ENCODE measurements at regions of chr17 and their contacts with region 1.

Region 1: GRCh38 chr17:40559954-40560591 is 5.2 kb downstream of the CCR7 start:
- DNase-seq: peak; percentile 69 to 90 (median 84)
- ATAC-seq: peak; percentile 24
- H3K4me3 ChIP-seq: peak overlapping the region; percentile 71
- H3K4me3 Mint-ChIP-seq: peak overlapping the region; percentile 86
- H3K27ac ChIP-seq: peak overlapping the region; percentile 74 to 96
- H3K27ac Mint-ChIP-seq: peak overlapping the region; percentile 94
- H3K4me1 ChIP-seq: peaks cover 55% of the 10 kb centered on the region
- H3K4me1 Mint-ChIP-seq: peaks cover 90% of the 10 kb centered on the region
- H3K27me3 ChIP-seq: no peaks in the 10 kb centered on the region
- H3K27me3 Mint-ChIP-seq: no peaks in the 10 kb centered on the region
- CTCF ChIP-seq: peak; percentile 97

Region 2: DNA sequence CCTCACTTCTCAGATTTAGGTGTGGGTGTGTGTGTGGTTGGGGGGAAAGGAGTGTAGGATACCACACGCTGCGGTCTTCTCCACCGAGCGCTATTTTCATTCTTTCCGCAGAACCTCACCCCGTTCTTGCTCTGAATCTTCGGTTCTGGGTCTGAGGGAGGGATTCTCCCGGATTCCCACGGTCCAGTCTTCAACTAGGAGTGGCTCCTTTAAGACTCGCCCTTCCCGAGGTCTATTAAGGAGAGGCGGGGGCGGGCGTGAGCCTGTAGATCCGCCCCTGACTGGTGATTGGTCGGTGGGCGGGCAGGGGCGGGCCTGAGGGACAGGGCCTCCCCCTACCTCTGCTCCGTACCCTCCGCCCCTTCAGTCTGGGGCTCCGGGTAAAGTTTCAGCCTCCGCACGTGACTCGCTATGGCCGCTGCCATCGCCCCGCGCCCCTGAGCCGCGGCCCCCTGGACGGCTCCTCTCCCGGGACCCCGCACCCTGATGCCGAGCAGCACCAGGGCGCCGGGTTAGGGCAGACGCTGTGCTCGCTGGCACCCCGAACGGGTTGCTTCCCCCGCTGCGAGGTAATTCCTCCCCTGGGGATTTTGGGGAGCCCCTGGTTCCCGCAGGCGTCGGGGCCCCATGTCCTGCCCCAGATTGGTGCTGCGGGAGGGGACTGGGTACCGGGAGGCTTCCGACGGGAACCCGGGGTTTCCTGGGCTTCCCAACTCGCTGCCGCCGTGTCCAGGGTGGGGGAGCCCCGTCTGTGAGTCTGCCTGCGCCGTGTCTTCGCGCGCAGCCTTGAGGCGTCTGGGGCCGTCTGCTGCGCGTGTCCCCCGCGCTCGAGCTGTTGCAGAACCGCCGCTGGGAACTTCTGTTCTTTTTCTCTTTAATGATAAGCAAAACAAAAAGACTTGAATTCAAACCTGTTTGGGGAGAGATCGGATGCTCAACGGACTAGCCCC is 241.9 kb before region 1 on chr17:
- CTCF ChIA-PET with region 1: no interaction called
- POLR2A ChIA-PET with region 1: no interaction called
- intact Hi-C with region 1: loop called in 1 of 2 experiments (anchors 1 kb)
- DNase-seq: peak; percentile 88 to 96 (median 91)
- ATAC-seq: peak; percentile 61
- H3K4me3 ChIP-seq: peak overlapping the region; percentile 91 to 95
- H3K4me3 Mint-ChIP-seq: peak overlapping the region; percentile 91
- H3K27ac ChIP-seq: peak overlapping the region; percentile 94 to 97
- H3K27ac Mint-ChIP-seq: peak overlapping the region; percentile 99
- H3K4me1 ChIP-seq: peaks cover 72% of the 10 kb centered on the region
- H3K4me1 Mint-ChIP-seq: peaks cover 87% of the 10 kb centered on the region
- H3K27me3 ChIP-seq: no peaks in the 10 kb centered on the region
- H3K27me3 Mint-ChIP-seq: no peaks in the 10 kb centered on the region
- CTCF ChIP-seq: no peak

Region 3: DNA sequence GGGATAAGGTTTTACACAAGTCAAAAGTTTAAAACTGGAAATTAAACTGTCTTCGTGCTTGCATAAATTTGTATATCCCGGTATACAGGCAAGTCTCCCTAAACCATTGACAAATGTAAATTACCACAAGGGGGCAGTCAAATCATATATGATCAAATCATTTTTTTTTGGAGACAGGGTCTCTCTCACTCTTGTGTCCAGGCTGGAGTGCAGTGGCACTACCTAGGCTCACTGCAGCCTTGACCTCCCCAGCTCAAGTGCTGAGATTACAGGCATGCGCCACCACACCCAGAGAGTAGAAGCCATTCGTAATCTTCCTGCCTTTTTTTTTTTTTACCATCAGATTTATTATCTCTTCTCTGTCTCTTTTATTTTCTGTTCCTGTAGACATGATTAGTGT is 160.9 kb before region 1 on chr17:
- CTCF ChIA-PET with region 1: interaction called, 32 read pairs
- POLR2A ChIA-PET with region 1: no interaction called
- intact Hi-C with region 1: loop called (anchors 1 kb)
- DNase-seq: peak in 2 of 9 experiments; percentile 71 to 78
- ATAC-seq: peak; percentile 55
- H3K4me3 ChIP-seq: no peak overlapping the region
- H3K4me3 Mint-ChIP-seq: no peak overlapping the region
- H3K27ac ChIP-seq: no peak overlapping the region
- H3K27ac Mint-ChIP-seq: no peak overlapping the region
- H3K4me1 ChIP-seq: no peaks in the 10 kb centered on the region
- H3K4me1 Mint-ChIP-seq: peaks cover 16% of the 10 kb centered on the region
- H3K27me3 ChIP-seq: no peaks in the 10 kb centered on the region
- H3K27me3 Mint-ChIP-seq: no peaks in the 10 kb centered on the region
- CTCF ChIP-seq: peak; percentile 74

Region 4: GRCh38 chr17:40474419-40475002 is 85.6 kb before region 1 on chr17:
- CTCF ChIA-PET with region 1: interaction called, 19 read pairs
- POLR2A ChIA-PET with region 1: interaction called, 5 read pairs
- intact Hi-C with region 1: no loop called
- DNase-seq: no peak
- ATAC-seq: no peak
- H3K4me3 ChIP-seq: no peak overlapping the region
- H3K4me3 Mint-ChIP-seq: no peak overlapping the region
- H3K27ac ChIP-seq: no peak overlapping the region
- H3K27ac Mint-ChIP-seq: no peak overlapping the region
- H3K4me1 ChIP-seq: peaks cover 11% of the 10 kb centered on the region
- H3K4me1 Mint-ChIP-seq: peaks cover 10% of the 10 kb centered on the region
- H3K27me3 ChIP-seq: no peaks in the 10 kb centered on the region
- H3K27me3 Mint-ChIP-seq: no peaks in the 10 kb centered on the region
- CTCF ChIP-seq: no peak

Region 5: DNA sequence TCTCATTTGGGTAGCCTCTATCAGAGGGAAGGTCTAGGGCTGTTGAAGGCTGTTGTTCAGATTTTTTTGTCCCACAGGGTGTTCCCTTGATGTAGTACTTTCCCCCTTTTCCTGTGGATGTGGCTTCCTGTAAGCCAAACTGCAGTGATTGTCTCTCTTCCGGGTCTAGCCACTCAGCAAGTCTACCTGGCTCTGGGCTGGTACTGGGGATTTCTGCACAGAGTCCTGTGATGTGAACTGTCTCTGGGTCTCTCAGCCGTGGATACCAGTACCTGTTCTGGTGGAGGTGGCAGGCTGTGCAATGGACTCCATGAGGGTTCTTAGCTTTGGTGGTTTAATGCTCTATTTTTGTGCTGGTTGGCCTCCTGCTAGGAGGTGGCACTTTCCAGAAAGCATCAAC is 28.5 kb after region 1 on chr17:
- CTCF ChIA-PET with region 1: interaction called, 25 read pairs
- POLR2A ChIA-PET with region 1: interaction called, 14 read pairs
- intact Hi-C with region 1: no loop called
- DNase-seq: peak in 2 of 9 experiments; percentile 48 to 68
- ATAC-seq: no peak
- H3K4me3 ChIP-seq: no peak overlapping the region
- H3K4me3 Mint-ChIP-seq: peak overlapping the region; percentile 40
- H3K27ac ChIP-seq: peak overlapping the region in 1 of 2 experiments; percentile 22
- H3K27ac Mint-ChIP-seq: peak overlapping the region; percentile 89
- H3K4me1 ChIP-seq: peaks cover 63% of the 10 kb centered on the region
- H3K4me1 Mint-ChIP-seq: peaks cover 83% of the 10 kb centered on the region
- H3K27me3 ChIP-seq: no peaks in the 10 kb centered on the region
- H3K27me3 Mint-ChIP-seq: no peaks in the 10 kb centered on the region
- CTCF ChIP-seq: no peak

Region 6: DNA sequence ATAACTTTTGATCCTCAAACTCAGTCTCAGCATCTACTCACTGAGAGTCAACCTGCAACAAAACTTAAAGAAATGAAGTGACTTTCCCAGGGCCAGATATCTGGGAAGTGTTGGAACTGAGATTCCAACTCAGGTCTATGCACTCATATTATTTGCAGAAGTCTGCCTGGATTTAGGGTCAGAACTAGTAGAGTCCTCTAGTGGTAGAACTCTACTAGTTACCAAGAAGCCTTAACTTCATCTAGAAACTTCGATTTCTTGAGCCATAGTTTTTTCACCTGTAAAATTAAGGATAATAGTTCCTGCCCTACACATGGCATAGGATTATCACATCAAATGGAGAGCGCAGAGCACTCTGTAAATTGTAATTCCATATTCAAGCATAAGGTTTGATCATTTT is 166.8 kb after region 1 on chr17:
- CTCF ChIA-PET with region 1: no interaction called
- POLR2A ChIA-PET with region 1: interaction called, 3 read pairs
- intact Hi-C with region 1: loop called (anchors 5 to 10 kb)
- DNase-seq: peak in 2 of 9 experiments; percentile 18 to 46
- ATAC-seq: peak; percentile 29
- H3K4me3 ChIP-seq: no peak overlapping the region
- H3K4me3 Mint-ChIP-seq: no peak overlapping the region
- H3K27ac ChIP-seq: no peak overlapping the region
- H3K27ac Mint-ChIP-seq: no peak overlapping the region
- H3K4me1 ChIP-seq: no peaks in the 10 kb centered on the region
- H3K4me1 Mint-ChIP-seq: no peaks in the 10 kb centered on the region
- H3K27me3 ChIP-seq: peaks cover 0 to 2% of the 10 kb centered on the region in 2 experiments
- H3K27me3 Mint-ChIP-seq: peaks cover 25% of the 10 kb centered on the region
- CTCF ChIP-seq: peak; percentile 56